ENCODE measurements at regions of chr17 and their contacts with region 1.

Region 1: DNA sequence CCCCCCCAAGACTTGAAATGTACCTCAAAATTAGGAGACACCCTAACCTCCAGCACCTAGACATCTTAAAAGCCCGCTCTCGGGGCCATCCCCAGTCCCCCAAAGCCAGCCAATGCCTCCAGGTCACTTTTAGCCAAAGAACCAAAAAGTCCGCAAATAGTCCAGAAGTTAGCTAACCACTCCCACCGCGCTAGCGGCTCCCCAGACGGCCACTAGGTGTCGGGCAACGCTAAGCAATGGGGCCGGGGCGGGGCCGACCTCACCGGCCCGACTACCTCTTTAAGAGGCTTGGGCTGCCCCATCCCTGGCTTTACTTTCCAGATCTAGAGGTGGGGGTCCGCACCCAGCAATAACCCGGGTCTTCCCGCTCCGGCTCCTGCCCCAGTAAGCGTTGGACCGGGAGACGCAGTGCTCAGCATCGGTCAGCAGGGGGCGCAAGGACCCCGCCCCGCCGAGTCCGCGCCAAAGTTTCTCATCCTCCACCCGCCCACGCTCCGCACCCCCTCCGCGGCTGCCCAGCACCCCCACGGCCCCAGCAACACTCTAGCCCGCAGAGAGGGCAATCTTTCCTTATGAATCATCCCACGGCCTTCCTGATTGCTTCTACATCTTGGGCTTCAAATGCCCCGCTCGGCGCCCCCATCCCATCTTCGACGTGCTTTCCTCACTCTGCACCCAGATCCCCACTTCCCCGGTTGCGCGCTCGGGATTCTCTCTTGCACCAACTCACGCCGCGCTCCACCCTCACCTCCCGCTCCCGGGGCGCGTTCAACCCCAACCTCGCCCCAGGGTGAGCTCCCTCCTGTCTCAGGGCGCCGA is 765 bp downstream of the COL1A1 start:
- DNase-seq: peak; percentile 90
- ATAC-seq: peak; percentile 78
- H3K4me3 Mint-ChIP-seq: peak overlapping the region; percentile 67
- H3K27ac Mint-ChIP-seq: no peak overlapping the region
- H3K4me1 Mint-ChIP-seq: peaks cover 20% of the 10 kb centered on the region
- H3K27me3 Mint-ChIP-seq: peaks cover 47% of the 10 kb centered on the region
- CTCF ChIP-seq: peak; percentile 100

Region 2: GRCh38 chr17:50169121-50169764 is 31.4 kb before region 1 on chr17:
- CTCF ChIA-PET with region 1: interaction called, 49 read pairs
- POLR2A ChIA-PET with region 1: no interaction called
- intact Hi-C with region 1: loop called (anchors 2 kb)
- DNase-seq: peak; percentile 71
- ATAC-seq: peak; percentile 86
- H3K4me3 Mint-ChIP-seq: peak overlapping the region; percentile 44
- H3K27ac Mint-ChIP-seq: peak overlapping the region; percentile 60
- H3K4me1 Mint-ChIP-seq: peaks cover 10% of the 10 kb centered on the region
- H3K27me3 Mint-ChIP-seq: peaks cover 3% of the 10 kb centered on the region
- CTCF ChIP-seq: peak; percentile 63

Region 3: DNA sequence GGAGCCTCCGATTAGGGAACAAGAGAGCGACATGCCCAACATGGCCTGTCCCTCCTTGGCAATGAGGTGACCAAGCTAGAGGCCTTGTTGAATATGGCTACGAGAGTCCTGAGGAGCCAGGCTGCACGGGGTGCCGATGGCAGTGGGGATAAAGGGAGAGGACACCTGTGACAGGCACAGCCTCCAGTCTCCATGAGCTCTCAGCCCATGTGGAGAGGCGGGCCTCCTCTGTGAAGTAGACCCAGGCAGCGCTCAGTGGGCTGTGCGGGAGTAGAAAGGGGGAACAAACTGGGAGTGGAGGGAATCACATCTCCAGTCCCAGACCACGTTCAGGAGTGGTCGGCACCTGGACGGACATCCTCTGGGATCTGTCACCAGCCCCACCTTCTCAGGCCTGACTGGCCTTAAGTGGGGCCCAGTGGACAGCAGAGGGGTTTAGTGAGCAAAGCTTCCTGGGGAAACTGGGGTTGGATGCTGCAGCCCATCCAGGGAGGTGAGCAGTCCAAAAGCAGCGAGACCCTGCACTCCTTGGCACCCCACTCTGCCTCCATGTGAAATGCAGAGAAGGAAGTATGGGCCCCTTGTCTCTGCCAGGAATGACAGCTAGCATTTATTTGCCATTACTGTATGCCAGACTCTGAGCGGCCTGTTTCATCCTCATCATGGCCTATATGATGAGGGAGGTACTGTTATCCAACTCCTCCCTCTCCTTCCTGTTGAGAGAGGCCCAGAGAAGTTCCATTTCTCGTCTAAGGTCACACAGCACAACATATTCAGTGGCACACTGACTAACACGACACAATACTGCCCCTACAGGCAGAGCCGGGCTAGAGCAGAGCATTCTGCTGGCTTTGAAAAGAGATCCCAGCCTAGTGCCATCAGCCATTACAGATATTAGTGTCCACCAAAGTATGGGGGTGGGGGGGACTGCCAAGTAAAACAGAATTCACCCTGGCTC is 69.1 kb after region 1 on chr17:
- CTCF ChIA-PET with region 1: interaction called, 209 read pairs
- POLR2A ChIA-PET with region 1: interaction called, 4 read pairs
- intact Hi-C with region 1: loop called (anchors 2 kb)
- DNase-seq: peak; percentile 88
- ATAC-seq: peak; percentile 94
- H3K4me3 Mint-ChIP-seq: no peak overlapping the region
- H3K27ac Mint-ChIP-seq: no peak overlapping the region
- H3K4me1 Mint-ChIP-seq: peaks cover 9% of the 10 kb centered on the region
- H3K27me3 Mint-ChIP-seq: peaks cover 11% of the 10 kb centered on the region
- CTCF ChIP-seq: peak; percentile 73

Region 4: GRCh38 chr17:50297407-50297865 is 96.8 kb after region 1 on chr17:
- CTCF ChIA-PET with region 1: interaction called, 157 read pairs
- POLR2A ChIA-PET with region 1: no interaction called
- intact Hi-C with region 1: loop called (anchors 2 kb)
- DNase-seq: peak; percentile 87
- ATAC-seq: peak; percentile 100
- H3K4me3 Mint-ChIP-seq: no peak overlapping the region
- H3K27ac Mint-ChIP-seq: no peak overlapping the region
- H3K4me1 Mint-ChIP-seq: no peaks in the 10 kb centered on the region
- H3K27me3 Mint-ChIP-seq: peaks cover 2% of the 10 kb centered on the region
- CTCF ChIP-seq: peak; percentile 98

Region 5: DNA sequence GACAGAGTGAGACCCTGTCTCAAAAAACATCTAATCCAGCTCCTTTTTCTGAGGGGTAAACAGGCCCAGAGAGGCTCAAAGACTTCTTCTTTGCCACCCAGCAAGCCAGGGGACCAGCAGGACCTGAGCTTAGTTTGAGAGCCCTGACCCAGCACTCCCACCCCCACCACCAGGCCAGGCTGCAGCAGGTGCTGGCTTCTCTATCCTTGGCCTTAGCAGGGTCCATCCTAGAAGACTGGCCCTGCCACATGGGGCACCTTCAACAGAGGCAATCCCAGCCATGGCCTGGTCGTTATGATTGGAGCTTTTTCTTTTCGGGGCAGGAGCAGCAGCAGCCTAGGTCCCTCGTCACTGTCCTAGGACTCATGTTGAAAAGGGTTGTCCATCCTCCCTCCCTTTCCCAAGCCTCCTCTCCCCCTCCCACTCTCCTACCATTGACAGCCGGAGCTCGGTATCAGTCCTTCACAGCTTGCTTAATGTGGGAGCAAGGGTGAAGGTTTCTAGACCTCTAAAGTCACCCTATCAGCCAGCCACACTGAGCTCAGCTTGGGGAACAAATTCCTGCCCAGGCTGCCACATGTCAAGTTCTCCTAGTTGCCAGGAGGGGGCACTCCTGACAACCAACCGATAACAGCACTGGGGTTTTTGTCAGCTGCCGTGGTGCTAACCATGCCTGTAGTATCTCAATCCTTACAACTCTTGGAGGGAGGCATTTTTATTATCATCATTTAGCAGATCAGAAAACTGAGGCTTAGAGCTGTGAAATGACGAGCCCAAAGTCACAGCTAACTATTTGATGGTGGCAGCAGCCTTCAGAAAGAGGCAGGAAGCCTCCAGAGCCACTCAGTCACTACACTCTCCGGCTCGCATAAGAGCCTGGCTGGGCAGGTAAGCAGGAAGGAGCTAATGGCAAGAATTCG is 161.2 kb after region 1 on chr17:
- CTCF ChIA-PET with region 1: interaction called, 13 read pairs
- POLR2A ChIA-PET with region 1: no interaction called
- intact Hi-C with region 1: no loop called
- DNase-seq: peak; percentile 73
- ATAC-seq: peak; percentile 87
- H3K4me3 Mint-ChIP-seq: no peak overlapping the region
- H3K27ac Mint-ChIP-seq: peak overlapping the region; percentile 79
- H3K4me1 Mint-ChIP-seq: peaks cover 16% of the 10 kb centered on the region
- H3K27me3 Mint-ChIP-seq: no peaks in the 10 kb centered on the region
- CTCF ChIP-seq: peak; percentile 85

Measured in activated CD8-positive, alpha-beta T cell treated with anti-CD3 and anti-CD28 coated beads for 36 hours (primary cell).